Caco-2 (cell line): ENCODE measurements at regions of chr19 and their contacts with region 1.

Region 1: DNA sequence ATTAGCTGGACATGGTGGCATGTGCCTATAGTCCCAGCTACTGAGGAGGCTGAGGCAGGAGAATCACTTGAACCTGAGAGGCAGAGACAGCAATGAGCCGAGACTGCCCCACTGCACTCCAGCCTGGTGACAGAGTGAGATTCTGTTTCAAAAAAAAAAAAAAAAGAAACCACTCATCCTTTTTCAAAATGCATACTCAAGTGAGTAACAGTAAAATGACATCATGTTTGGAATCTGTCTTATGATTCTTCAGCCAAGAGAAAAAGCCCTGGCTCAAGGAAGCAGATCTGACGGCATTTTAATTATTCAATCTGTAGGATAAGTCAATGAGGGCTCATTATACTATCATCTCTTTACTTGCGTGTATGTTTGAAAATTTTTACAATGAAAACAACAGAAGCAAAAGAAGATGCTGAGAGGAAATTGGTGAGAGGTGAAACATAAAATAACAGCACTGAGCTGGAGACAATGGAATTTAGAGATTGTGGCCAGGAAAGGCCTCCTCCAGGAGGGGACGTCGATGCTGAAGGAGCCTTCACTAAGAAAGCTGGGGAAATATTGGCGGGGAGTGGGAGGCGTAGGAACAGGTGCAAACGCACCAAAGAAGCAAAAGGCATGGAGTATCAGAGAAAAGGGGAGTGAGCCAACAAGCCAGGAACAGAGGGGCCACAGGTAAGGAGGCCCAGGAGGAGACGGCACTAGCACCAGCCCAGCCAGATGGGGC is 12.9 kb upstream of the CCNE1 start:
- DNase-seq: no peak
- H3K4me3 ChIP-seq: no peak overlapping the region
- H3K4me3 Mint-ChIP-seq: no peak overlapping the region
- H3K27ac Mint-ChIP-seq: no peak overlapping the region
- H3K4me1 ChIP-seq: no peaks in the 10 kb centered on the region
- H3K4me1 Mint-ChIP-seq: no peaks in the 10 kb centered on the region
- H3K27me3 ChIP-seq: no peaks in the 10 kb centered on the region; the same call in 1 of the 2 replicates
- H3K27me3 Mint-ChIP-seq: no peaks in the 10 kb centered on the region
- CTCF ChIP-seq: no peak

Region 2: GRCh38 chr19:28359431-28360414 is 1439.2 kb before region 1 on chr19:
- CTCF ChIA-PET with region 1: no interaction called
- POLR2A ChIA-PET with region 1: no interaction called
- intact Hi-C with region 1: loop called (anchors 5 kb)
- DNase-seq: no peak
- H3K4me3 ChIP-seq: no peak overlapping the region
- H3K4me3 Mint-ChIP-seq: no peak overlapping the region
- H3K27ac Mint-ChIP-seq: no peak overlapping the region
- H3K4me1 ChIP-seq: no peaks in the 10 kb centered on the region
- H3K4me1 Mint-ChIP-seq: no peaks in the 10 kb centered on the region
- H3K27me3 ChIP-seq: no peaks in the 10 kb centered on the region
- H3K27me3 Mint-ChIP-seq: no peaks in the 10 kb centered on the region
- CTCF ChIP-seq: no peak

Region 3: GRCh38 chr19:29514525-29515232 is 284.3 kb before region 1 on chr19:
- CTCF ChIA-PET with region 1: no interaction called
- POLR2A ChIA-PET with region 1: no interaction called
- intact Hi-C with region 1: no loop called
- DNase-seq: no peak
- H3K4me3 ChIP-seq: no peak overlapping the region
- H3K4me3 Mint-ChIP-seq: no peak overlapping the region
- H3K27ac Mint-ChIP-seq: no peak overlapping the region
- H3K4me1 ChIP-seq: no peaks in the 10 kb centered on the region
- H3K4me1 Mint-ChIP-seq: no peaks in the 10 kb centered on the region
- H3K27me3 ChIP-seq: no peaks in the 10 kb centered on the region
- H3K27me3 Mint-ChIP-seq: peaks cover 5% of the 10 kb centered on the region
- CTCF ChIP-seq: no peak